ENCODE measurements at regions of chr13 and their contacts with region 1.

Region 1: GRCh38 chr13:77565635-77566034 is 30.1 kb downstream of the SCEL start:
- DNase-seq: no peak
- H3K4me3 ChIP-seq: no peak overlapping the region
- H3K27ac ChIP-seq: no peak overlapping the region
- H3K4me1 ChIP-seq: no peaks in the 10 kb centered on the region
- H3K27me3 ChIP-seq: no peaks in the 10 kb centered on the region
- CTCF ChIP-seq: peak; percentile 23 to 81 (median 58)
- POLR2A ChIP-seq: no peak

Region 2: GRCh38 chr13:77492982-77493381 is 72.7 kb before region 1 on chr13:
- intact Hi-C with region 1: loop called (anchors 2 kb)
- DNase-seq: peak; percentile 20 to 39
- H3K4me3 ChIP-seq: no peak overlapping the region
- H3K27ac ChIP-seq: no peak overlapping the region
- H3K4me1 ChIP-seq: no peaks in the 10 kb centered on the region
- H3K27me3 ChIP-seq: no peaks in the 10 kb centered on the region
- CTCF ChIP-seq: peak in 5 of 6 experiments; percentile 17 to 84 (median 65)
- POLR2A ChIP-seq: no peak

Region 3: DNA sequence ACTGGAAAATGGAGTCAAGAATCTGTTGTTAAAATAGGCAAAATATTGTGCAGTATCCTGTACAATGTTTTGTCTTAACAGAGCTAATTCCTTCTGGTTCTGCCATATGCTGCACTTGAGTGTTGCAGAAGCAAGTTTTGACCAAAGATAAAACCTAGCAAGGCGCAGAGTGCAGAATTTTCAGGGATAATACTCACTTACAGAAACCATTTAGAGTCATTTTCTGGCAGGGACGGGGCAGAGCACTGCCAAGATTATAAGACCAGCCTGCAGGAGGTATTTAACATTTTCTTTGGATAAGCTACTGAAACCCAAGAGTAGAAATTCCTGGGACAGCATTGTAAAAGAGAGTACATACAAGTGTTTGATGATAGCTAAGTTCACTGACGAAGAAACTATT is 512.5 kb after region 1 on chr13:
- intact Hi-C with region 1: no loop called
- DNase-seq: no peak
- H3K4me3 ChIP-seq: no peak overlapping the region
- H3K27ac ChIP-seq: no peak overlapping the region
- H3K4me1 ChIP-seq: no peaks in the 10 kb centered on the region
- H3K27me3 ChIP-seq: no peaks in the 10 kb centered on the region
- CTCF ChIP-seq: no peak
- POLR2A ChIP-seq: no peak